ENCODE measurements at regions of chr4 and their contacts with region 1.

Region 1: GRCh38 chr4:118270492-118270891 is 82.3 kb downstream of the PRSS12 start:
- DNase-seq: peak; percentile 41
- ATAC-seq: no peak
- H3K4me3 ChIP-seq: no peak overlapping the region
- H3K27ac ChIP-seq: no peak overlapping the region
- H3K4me1 ChIP-seq: no peaks in the 10 kb centered on the region
- H3K27me3 ChIP-seq: no peaks in the 10 kb centered on the region
- CTCF ChIP-seq: peak; percentile 56
- EP300 ChIP-seq: no peak
- POLR2A ChIP-seq: no peak
- RAD21 ChIP-seq: peak; percentile 19; the same call in 1 of the 2 replicates

Region 2: DNA sequence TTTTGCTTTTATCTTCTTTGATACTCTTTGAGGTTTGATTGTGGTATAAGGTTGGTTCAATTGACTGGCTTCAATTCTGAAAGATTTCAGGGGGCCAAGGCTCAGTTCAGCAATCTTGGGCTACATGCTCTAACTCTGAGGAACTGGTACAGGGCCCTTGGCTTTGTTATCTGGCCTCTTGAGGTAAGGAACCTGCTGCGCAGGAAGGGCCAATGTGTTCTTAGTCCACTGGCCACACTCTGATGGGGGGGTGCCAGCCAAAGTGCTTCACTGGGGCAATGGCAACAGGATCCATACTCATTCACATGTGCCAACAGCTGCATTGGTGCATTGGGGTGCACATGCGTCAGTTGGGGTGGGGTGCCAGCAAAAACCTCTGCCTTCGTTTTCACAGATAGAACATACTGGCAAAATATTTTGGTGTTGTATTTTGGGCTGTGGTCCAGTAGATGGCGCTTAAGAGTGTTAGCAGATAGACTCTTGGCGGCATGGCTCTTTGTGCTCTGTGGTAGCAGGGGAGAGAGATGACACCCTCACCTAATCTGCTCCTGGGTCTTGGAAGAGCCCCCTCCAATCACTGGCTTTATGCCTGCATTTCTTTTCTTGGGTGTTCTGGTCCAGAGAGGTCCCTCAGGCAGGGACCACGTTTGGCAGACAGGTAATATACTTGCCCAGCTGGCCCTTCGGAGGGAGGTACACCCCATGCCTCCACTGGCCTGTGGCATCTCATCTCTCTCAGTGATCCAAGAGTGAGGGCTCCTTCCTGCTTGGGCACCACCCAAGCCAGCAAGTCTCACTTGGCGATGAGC is 193.3 kb before region 1 on chr4:
- CTCF ChIA-PET with region 1: interaction called, 13 read pairs
- POLR2A ChIA-PET with region 1: no interaction called
- in situ Hi-C with region 1: loop called (anchors 10 kb)
- intact Hi-C with region 1: loop called (anchors 1 kb)
- DNase-seq: peak; percentile 31
- ATAC-seq: peak; percentile 91
- H3K4me3 ChIP-seq: no peak overlapping the region
- H3K27ac ChIP-seq: no peak overlapping the region
- H3K4me1 ChIP-seq: no peaks in the 10 kb centered on the region
- H3K27me3 ChIP-seq: no peaks in the 10 kb centered on the region
- CTCF ChIP-seq: peak; percentile 67
- EP300 ChIP-seq: no peak
- POLR2A ChIP-seq: no peak
- RAD21 ChIP-seq: no peak

Region 3: DNA sequence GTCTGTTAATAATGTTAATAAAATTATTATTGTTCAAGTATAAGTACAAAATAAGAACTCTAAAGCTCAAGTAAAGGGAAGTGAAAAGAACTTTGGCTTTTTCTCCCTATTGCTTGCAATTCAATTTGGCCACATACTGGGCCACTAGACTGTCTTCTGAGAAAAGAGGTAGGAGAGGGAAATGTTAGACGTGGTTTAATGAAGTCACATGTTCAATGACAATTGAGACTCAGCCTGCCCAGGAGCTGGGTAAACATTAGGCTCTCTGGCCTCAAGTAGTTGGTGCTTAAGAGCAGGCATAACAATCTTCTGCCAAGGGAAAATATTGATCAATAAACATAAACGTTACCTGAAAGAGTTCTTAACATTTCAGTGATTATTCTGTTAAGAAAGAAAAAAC is 97.4 kb after region 1 on chr4:
- CTCF ChIA-PET with region 1: no interaction called
- POLR2A ChIA-PET with region 1: no interaction called
- in situ Hi-C with region 1: no loop called
- intact Hi-C with region 1: no loop called
- DNase-seq: no peak
- ATAC-seq: no peak
- H3K4me3 ChIP-seq: no peak overlapping the region
- H3K27ac ChIP-seq: no peak overlapping the region
- H3K4me1 ChIP-seq: no peaks in the 10 kb centered on the region
- H3K27me3 ChIP-seq: peaks cover 0 to 2% of the 10 kb centered on the region in 2 experiments; a peak in 1 of 5 replicates
- CTCF ChIP-seq: no peak
- EP300 ChIP-seq: no peak
- POLR2A ChIP-seq: no peak
- RAD21 ChIP-seq: no peak

Measured in HepG2 (cell line).